Naive thymus-derived CD8-positive, alpha-beta T cell (primary cell): ENCODE measurements at regions of chr19 and their contacts with region 1.

Region 1: DNA sequence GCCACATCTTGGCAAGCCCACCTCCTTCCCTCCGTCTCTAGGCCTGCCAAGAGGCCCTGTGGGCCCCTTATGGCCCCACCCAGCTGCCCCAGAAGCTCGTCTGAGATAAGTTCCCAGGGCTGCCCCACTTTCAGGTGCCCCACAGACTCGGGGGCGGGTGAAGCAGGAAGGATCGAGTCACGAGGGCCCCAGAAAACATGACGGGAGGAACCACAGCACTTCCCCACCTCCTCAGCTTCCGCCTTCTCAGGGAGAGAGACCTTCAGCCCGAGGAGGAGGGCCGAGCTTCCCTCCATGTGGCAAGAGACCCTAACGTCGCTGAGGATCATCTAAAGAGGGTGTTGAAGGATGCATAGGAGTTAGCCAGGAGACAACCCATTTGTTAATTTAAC is 4.5 kb upstream of the IL12RB1 start:
- DNase-seq: peak; percentile 64 to 91 (median 76)
- ATAC-seq: peak; percentile 75 to 78
- H3K4me3 Mint-ChIP-seq: peak overlapping the region; percentile 40 to 97 (median 72)
- H3K27ac Mint-ChIP-seq: peak overlapping the region; percentile 90 to 99 (median 97)
- H3K4me1 Mint-ChIP-seq: peaks cover 27 to 73% (median 59%) of the 10 kb centered on the region in 4 donors
- H3K27me3 Mint-ChIP-seq: no peaks in the 10 kb centered on the region

Region 2: GRCh38 chr19:18007044-18007916 is 83.9 kb before region 1 on chr19:
- POLR2A ChIA-PET with region 1: interaction called, 27 read pairs
- DNase-seq: peak; percentile 67 to 87 (median 82)
- ATAC-seq: peak; percentile 60 to 61
- H3K4me3 Mint-ChIP-seq: peak overlapping the region; percentile 84 to 98 (median 93)
- H3K27ac Mint-ChIP-seq: peak overlapping the region; percentile 68 to 99 (median 96)
- H3K4me1 Mint-ChIP-seq: peaks cover 13 to 52% (median 34%) of the 10 kb centered on the region in 4 donors
- H3K27me3 Mint-ChIP-seq: no peaks in the 10 kb centered on the region

Region 3: DNA sequence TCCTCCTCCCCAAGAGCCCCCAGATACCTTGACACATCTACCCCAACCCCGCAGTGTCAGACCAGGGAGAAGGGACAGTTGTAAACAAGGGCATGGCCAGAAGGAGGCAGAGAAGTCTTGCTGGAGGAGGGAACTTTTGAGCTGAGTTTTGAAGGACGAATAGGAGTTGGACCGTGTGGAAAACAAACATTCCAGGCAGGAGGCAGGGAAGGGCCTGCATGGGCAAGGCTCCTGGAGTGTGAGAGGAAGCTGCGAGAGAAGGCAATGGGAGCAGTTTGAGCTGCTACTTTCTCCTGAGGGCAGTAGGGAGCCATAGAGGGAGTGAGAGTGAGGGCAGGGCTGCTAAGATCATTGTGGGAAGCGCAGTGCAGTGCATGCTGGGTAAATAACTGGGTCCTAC is 27.8 kb before region 1 on chr19:
- POLR2A ChIA-PET with region 1: interaction called, 11 read pairs
- DNase-seq: peak in 5 of 10 donors; percentile 22 to 76 (median 37)
- ATAC-seq: peak in 1 of 2 donors; percentile 41
- H3K4me3 Mint-ChIP-seq: no peak overlapping the region
- H3K27ac Mint-ChIP-seq: peak overlapping the region in 3 of 10 donors; percentile 10 to 77 (median 33)
- H3K4me1 Mint-ChIP-seq: peaks cover 3 to 6% (median 4%) of the 10 kb centered on the region in 4 donors
- H3K27me3 Mint-ChIP-seq: no peaks in the 10 kb centered on the region

Region 4: DNA sequence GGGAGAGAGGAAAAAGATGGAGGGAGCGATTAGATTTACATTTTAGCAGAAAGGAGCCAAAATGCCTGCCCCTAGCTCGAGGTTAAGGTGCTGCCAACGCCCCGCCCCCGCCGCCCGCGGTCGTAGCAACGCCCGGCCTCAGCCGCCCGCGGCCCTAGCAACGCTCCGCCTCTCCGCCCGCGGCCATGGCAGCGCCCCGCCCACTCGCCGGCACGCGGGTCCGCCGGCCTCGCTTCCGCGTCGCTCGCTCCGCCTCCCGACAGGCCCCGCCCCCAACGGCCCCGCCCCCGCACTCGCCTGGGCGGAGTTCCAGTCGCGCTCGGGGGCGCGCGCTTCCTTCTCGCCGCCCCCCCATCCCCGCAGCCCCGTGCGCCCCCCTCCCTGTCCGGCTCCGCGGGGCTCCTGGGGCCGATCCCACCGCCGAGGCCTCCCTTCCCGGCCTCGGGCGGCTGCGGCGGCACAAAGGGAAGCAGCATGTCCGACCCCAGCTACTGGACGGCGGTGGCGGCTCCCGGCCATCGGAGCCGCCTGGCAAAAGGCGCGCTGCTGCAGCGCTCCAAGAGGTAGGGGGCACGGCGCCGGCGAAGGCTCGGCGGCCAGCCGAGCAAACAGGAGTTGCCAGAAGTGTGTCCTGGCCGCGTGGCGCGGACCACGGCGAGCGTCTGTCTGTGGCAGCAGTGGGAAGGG is 26.6 kb after region 1 on chr19:
- POLR2A ChIA-PET with region 1: interaction called, 135 read pairs
- DNase-seq: peak; percentile 92 to 98 (median 96)
- ATAC-seq: peak; percentile 69 to 73
- H3K4me3 Mint-ChIP-seq: peak overlapping the region; percentile 79 to 95 (median 90)
- H3K27ac Mint-ChIP-seq: peak overlapping the region; percentile 95 to 100 (median 98)
- H3K4me1 Mint-ChIP-seq: peaks cover 18 to 48% (median 40%) of the 10 kb centered on the region in 4 donors
- H3K27me3 Mint-ChIP-seq: no peaks in the 10 kb centered on the region

Region 5: GRCh38 chr19:18152444-18152816 is 61.2 kb after region 1 on chr19:
- POLR2A ChIA-PET with region 1: interaction called, 15 read pairs
- DNase-seq: peak; percentile 95 to 100 (median 97)
- ATAC-seq: peak; percentile 70 to 72
- H3K4me3 Mint-ChIP-seq: peak overlapping the region; percentile 83 to 97 (median 93)
- H3K27ac Mint-ChIP-seq: peak overlapping the region; percentile 93 to 99 (median 96)
- H3K4me1 Mint-ChIP-seq: peaks cover 15 to 31% (median 26%) of the 10 kb centered on the region in 4 donors
- H3K27me3 Mint-ChIP-seq: no peaks in the 10 kb centered on the region